ENCODE measurements at regions of chr1 and their contacts with region 1.

Region 1: GRCh38 chr1:31004231-31004621 is 61.3 kb downstream of the PUM1 start:
- DNase-seq: no peak
- H3K4me3 ChIP-seq: no peak overlapping the region
- H3K4me3 Mint-ChIP-seq: no peak overlapping the region
- H3K27ac ChIP-seq: no peak overlapping the region
- H3K27ac Mint-ChIP-seq: peak overlapping the region in 2 of 7 donors; percentile 24 to 77
- H3K4me1 ChIP-seq: peaks cover 16% of the 10 kb centered on the region
- H3K4me1 Mint-ChIP-seq: peaks cover 33 to 54% (median 43%) of the 10 kb centered on the region in 4 donors
- H3K27me3 ChIP-seq: no peaks in the 10 kb centered on the region
- H3K27me3 Mint-ChIP-seq: no peaks in the 10 kb centered on the region

Region 2: GRCh38 chr1:31041529-31041928 is 37.3 kb after region 1 on chr1:
- CTCF ChIA-PET with region 1: no interaction called
- POLR2A ChIA-PET with region 1: no interaction called
- intact Hi-C with region 1: loop called (anchors 5 kb)
- DNase-seq: no peak
- H3K4me3 ChIP-seq: no peak overlapping the region
- H3K4me3 Mint-ChIP-seq: peak overlapping the region in 3 of 8 donors; percentile 8 to 39 (median 20)
- H3K27ac ChIP-seq: no peak overlapping the region
- H3K27ac Mint-ChIP-seq: peak overlapping the region in 1 of 7 donors; percentile 54
- H3K4me1 ChIP-seq: peaks cover 43% of the 10 kb centered on the region
- H3K4me1 Mint-ChIP-seq: peaks cover 41 to 62% (median 51%) of the 10 kb centered on the region in 4 donors
- H3K27me3 ChIP-seq: no peaks in the 10 kb centered on the region
- H3K27me3 Mint-ChIP-seq: no peaks in the 10 kb centered on the region

Measured in CD4-positive, alpha-beta memory T cell (primary cell).